Tibial artery (tissue), 4 donors: ENCODE measurements at regions of chr1 and their contacts with region 1.

Region 1: DNA sequence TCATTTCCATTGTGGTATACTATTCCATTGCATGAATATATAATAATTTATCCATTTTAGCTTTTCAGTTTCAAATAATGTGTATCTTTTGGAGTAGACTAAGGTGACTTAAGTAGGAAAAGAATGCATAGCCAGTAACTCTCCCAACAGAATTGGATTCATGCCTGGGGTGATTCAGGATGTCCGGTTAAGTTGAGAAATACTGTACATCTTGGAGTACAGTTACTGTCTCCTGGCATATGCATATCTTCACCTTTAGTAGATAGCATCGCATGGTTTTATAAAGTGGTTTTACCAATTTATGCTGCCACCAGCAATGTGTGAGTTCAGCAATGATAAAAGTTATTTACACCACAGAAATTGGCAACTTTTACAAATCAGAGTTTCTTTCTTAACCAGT is 18.6 kb upstream of the SLC6A9 start:
- DNase-seq: no peak
- H3K4me3 ChIP-seq: no peak overlapping the region
- H3K27ac ChIP-seq: no peak overlapping the region
- H3K4me1 ChIP-seq: peaks cover 0 to 16% (median 9%) of the 10 kb centered on the region in 4 donors
- H3K27me3 ChIP-seq: no peaks in the 10 kb centered on the region
- CTCF ChIP-seq: no peak

Region 2: DNA sequence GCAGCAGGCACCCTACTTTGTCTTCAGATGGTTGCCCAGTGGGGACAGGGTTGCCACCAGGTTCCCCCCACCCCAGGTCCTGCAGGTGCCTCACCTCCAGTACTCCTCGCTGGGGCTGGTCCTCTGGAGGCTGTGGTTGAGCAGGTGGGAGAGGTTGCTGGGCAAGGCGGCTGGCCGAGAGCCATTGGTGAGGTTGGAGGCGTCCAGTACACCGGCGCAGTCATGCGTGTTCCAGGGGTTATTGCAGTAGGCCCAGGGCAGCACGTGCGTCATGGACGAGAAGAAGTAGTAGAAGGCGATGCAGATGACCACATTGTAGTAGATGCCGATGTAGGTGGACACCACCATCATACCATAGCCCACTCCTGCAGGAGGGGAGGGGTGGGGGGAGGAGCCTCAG is 41.6 kb before region 1 on chr1:
- intact Hi-C with region 1: loop called (anchors 5 kb)
- DNase-seq: no peak
- H3K4me3 ChIP-seq: no peak overlapping the region
- H3K27ac ChIP-seq: no peak overlapping the region
- H3K4me1 ChIP-seq: peaks cover 0 to 5% (median 4%) of the 10 kb centered on the region in 4 donors
- H3K27me3 ChIP-seq: no peaks in the 10 kb centered on the region
- CTCF ChIP-seq: no peak

Region 3: GRCh38 chr1:44036409-44037139 is 13.3 kb before region 1 on chr1:
- intact Hi-C with region 1: no loop called
- DNase-seq: peak; percentile 67 to 79
- H3K4me3 ChIP-seq: no peak overlapping the region
- H3K27ac ChIP-seq: peak overlapping the region; percentile 71 to 76
- H3K4me1 ChIP-seq: peaks cover 9 to 37% (median 29%) of the 10 kb centered on the region in 4 donors
- H3K27me3 ChIP-seq: no peaks in the 10 kb centered on the region
- CTCF ChIP-seq: peak; percentile 80 to 90

Region 4: GRCh38 chr1:44270686-44271628 is 221.1 kb after region 1 on chr1:
- intact Hi-C with region 1: no loop called
- DNase-seq: no peak
- H3K4me3 ChIP-seq: no peak overlapping the region
- H3K27ac ChIP-seq: no peak overlapping the region
- H3K4me1 ChIP-seq: peaks cover 0 to 10% (median 8%) of the 10 kb centered on the region in 4 donors
- H3K27me3 ChIP-seq: no peaks in the 10 kb centered on the region
- CTCF ChIP-seq: no peak

Region 5: GRCh38 chr1:44327679-44328491 is 278.0 kb after region 1 on chr1:
- intact Hi-C with region 1: no loop called
- DNase-seq: peak; percentile 92 to 95
- H3K4me3 ChIP-seq: no peak overlapping the region
- H3K27ac ChIP-seq: peak overlapping the region; percentile 46 to 66
- H3K4me1 ChIP-seq: peaks cover 0 to 26% (median 21%) of the 10 kb centered on the region in 4 donors
- H3K27me3 ChIP-seq: no peaks in the 10 kb centered on the region
- CTCF ChIP-seq: no peak